ENCODE measurements at regions of chr17 and their contacts with region 1.

Region 1: GRCh38 chr17:82134101-82134500 is 36.1 kb upstream of the FASN start:
- DNase-seq: no peak
- ATAC-seq: no peak
- H3K4me3 ChIP-seq: no peak overlapping the region
- H3K27ac ChIP-seq: no peak overlapping the region
- H3K4me1 ChIP-seq: no peaks in the 10 kb centered on the region
- H3K27me3 ChIP-seq: no peaks in the 10 kb centered on the region
- CTCF ChIP-seq: no peak

Region 2: GRCh38 chr17:82037113-82037888 is 96.8 kb before region 1 on chr17 and contains the start of gene DCXR:
- CTCF ChIA-PET with region 1: no interaction called
- POLR2A ChIA-PET with region 1: no interaction called
- in situ Hi-C with region 1: no loop called
- intact Hi-C with region 1: no loop called
- DNase-seq: peak; percentile 46
- ATAC-seq: peak; percentile 96
- H3K4me3 ChIP-seq: peak within 1 kb of the TSS; percentile 58 to 79
- H3K27ac ChIP-seq: peak within 1 kb of the TSS; percentile 83
- H3K4me1 ChIP-seq: peaks cover 16% of the 10 kb centered on the region
- H3K27me3 ChIP-seq: no peaks in the 10 kb centered on the region
- CTCF ChIP-seq: peak; percentile 99
- total RNA-seq, gene DCXR: 128 TPM

Region 3: GRCh38 chr17:82051776-82052637 is 82.1 kb before region 1 on chr17 and contains the starts of genes GPS1 and RFNG:
- CTCF ChIA-PET with region 1: no interaction called
- POLR2A ChIA-PET with region 1: no interaction called
- in situ Hi-C with region 1: loop called (anchors 10 kb)
- intact Hi-C with region 1: no loop called
- DNase-seq: no peak
- ATAC-seq: peak; percentile 86
- H3K4me3 ChIP-seq: peak within 1 kb of the TSS; percentile 85 to 99
- H3K27ac ChIP-seq: peak within 1 kb of the TSS; percentile 82
- H3K4me1 ChIP-seq: peaks cover 21% of the 10 kb centered on the region
- H3K27me3 ChIP-seq: no peaks in the 10 kb centered on the region
- CTCF ChIP-seq: no peak
- total RNA-seq, gene GPS1: 175 TPM
- total RNA-seq, gene RFNG: 43.4 TPM

Measured in Panc1 (cell line).